Activated T-helper 1 cell treated with anti-CD3 and anti-CD28 coated beads, Interleukin-12 subunit alpha, Interleukin-12 subunit beta, Interleukin-2, Interleukin-4 antibody, amounts not matched to agents 30 ng/mL and 10 ng/mL and 1 ng/mL, durations not matched to agents 14 hours and 24 hours and 36 hours (primary cell): ENCODE measurements at regions of chr2 and their contacts with region 1.

Region 1: GRCh38 chr2:127526149-127527000 is at the start of gene IWS1:
- DNase-seq: peak; percentile 92
- H3K4me3 Mint-ChIP-seq: peak within 1 kb of the TSS; percentile 92
- H3K27ac Mint-ChIP-seq: peak within 1 kb of the TSS; percentile 94
- H3K4me1 Mint-ChIP-seq: peaks cover 29% of the 10 kb centered on the region
- H3K27me3 Mint-ChIP-seq: peaks cover 10% of the 10 kb centered on the region
- total RNA-seq, gene IWS1: 52.3 and 57.6 TPM in 2 replicates

Region 2: DNA sequence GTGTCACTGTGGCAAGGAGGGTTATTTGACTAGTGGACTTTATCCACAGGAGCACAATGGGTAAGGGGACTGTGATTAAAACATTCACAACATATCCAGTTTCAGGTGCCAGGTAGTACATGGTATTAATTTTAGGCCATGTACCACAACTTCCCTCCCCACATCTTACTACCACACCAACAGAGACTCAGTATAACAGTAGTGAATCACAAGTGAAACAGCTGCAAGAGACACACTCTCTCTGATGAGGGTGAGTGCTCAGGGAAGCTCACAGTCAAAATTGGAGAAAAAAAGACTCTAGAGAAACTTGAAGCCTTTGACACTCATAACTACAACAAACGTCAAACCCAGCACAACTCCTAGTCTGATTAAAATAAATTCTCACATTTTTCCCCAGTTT is 1238.0 kb before region 1 on chr2:
- intact Hi-C with region 1: no loop called
- DNase-seq: no peak
- H3K4me3 Mint-ChIP-seq: no peak overlapping the region
- H3K27ac Mint-ChIP-seq: no peak overlapping the region
- H3K4me1 Mint-ChIP-seq: no peaks in the 10 kb centered on the region
- H3K27me3 Mint-ChIP-seq: no peaks in the 10 kb centered on the region

Region 3: DNA sequence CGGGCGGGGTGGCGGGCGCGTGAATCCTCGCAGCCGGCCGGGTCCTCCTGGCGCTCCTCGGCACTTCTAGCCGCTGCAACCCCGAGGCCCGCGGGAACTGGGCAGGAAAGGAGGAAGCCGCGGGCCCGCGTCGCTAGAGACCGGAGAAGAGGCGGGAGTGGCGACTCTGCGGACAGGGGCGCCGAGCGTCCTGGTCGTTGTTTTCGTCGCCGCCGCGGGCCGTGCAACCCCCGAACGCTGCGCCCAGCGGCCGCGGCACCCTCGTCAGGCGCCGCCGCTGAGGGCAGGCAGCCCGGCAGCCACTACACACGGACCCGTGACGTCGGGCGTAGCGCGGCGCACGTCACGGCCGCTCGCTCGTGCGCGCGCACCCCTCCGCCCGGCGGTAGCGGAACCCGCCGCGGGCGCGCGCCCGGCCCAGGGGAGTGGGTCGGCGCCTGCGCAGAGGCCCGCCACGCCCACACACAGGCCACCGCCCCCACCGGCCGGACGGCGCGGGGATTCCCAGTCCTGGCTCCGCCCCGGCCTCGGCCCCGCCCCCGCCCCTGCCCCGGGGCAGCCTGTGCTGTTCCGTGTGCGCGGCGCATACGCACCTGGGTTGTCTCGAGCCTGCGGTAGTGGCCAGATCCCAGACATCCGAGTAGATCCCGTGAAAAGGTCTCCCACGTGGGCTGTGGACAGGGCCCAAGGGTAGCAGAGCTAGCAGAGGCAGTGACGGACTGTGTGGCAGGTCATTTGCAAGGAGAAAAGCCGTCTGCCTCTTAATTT is 138.5 kb before region 1 on chr2 and contains the start of gene MAP3K2:
- intact Hi-C with region 1: loop called (anchors 1 kb)
- DNase-seq: peak; percentile 89
- H3K4me3 Mint-ChIP-seq: peak within 1 kb of the TSS; percentile 96
- H3K27ac Mint-ChIP-seq: peak within 1 kb of the TSS; percentile 98
- H3K4me1 Mint-ChIP-seq: peaks cover 74% of the 10 kb centered on the region
- H3K27me3 Mint-ChIP-seq: no peaks in the 10 kb centered on the region
- total RNA-seq, gene MAP3K2: 64.1 and 66.1 TPM in 2 replicates

Region 4: DNA sequence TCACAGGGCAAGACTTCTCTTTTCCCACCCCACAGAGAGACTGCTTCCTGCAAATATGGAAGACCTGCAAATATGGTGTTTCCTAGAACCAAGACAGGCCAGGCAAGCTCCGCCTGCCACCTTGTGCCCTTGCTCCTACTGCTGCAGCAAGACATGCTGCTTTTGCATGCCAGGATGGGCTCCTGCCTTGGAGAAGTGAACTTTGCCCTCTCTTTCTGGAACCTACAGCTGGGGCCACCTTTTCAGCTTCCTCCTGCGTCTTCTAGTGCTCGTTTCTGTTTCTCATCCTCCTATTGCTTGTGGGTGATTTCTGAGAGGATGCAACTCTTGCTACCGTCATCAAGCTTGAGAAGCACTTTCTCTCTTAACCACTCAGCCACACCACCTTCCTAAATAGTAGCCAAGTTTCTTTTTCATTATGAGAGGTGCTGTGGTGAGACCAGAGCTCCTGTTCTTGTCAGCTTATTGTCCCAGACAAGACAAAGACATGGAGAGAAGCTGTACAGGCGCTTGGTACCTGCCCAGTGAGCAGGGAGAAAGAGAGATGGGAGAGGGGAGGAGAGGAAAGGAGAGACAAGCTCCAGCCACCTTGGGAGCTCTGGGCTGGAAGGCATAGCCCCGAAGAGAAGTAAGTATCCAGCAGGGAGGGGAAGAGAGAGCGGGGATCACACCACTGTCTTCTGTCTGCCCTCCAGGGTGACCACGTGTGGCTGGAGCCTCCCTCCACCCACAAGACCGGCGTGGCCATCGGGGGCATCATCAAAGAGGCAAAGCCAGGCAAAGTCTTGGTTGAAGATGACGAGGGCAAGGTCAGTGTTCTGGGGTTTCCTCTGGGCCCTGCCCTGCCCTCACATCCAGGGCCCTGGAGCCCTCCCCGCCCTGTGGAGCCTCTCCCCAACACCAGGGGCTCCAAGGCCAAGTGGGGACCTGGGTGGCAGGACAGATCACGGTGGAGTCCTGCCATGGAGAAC is 37.4 kb after region 1 on chr2:
- intact Hi-C with region 1: loop called (anchors 1 kb)
- DNase-seq: peak; percentile 46
- H3K4me3 Mint-ChIP-seq: peak overlapping the region; percentile 12
- H3K27ac Mint-ChIP-seq: peak overlapping the region; percentile 30
- H3K4me1 Mint-ChIP-seq: peaks cover 16% of the 10 kb centered on the region
- H3K27me3 Mint-ChIP-seq: peaks cover 32% of the 10 kb centered on the region

Region 5: GRCh38 chr2:127701193-127701650 is 174.8 kb after region 1 on chr2 and contains the start of gene SFT2D3:
- intact Hi-C with region 1: loop called (anchors 2 kb)
- DNase-seq: peak; percentile 89
- H3K4me3 Mint-ChIP-seq: peak within 1 kb of the TSS; percentile 92
- H3K27ac Mint-ChIP-seq: peak within 1 kb of the TSS; percentile 97
- H3K4me1 Mint-ChIP-seq: peaks cover 35% of the 10 kb centered on the region
- H3K27me3 Mint-ChIP-seq: no peaks in the 10 kb centered on the region
- total RNA-seq, gene SFT2D3: 6.6 and 7.1 TPM in 2 replicates

Region 6: DNA sequence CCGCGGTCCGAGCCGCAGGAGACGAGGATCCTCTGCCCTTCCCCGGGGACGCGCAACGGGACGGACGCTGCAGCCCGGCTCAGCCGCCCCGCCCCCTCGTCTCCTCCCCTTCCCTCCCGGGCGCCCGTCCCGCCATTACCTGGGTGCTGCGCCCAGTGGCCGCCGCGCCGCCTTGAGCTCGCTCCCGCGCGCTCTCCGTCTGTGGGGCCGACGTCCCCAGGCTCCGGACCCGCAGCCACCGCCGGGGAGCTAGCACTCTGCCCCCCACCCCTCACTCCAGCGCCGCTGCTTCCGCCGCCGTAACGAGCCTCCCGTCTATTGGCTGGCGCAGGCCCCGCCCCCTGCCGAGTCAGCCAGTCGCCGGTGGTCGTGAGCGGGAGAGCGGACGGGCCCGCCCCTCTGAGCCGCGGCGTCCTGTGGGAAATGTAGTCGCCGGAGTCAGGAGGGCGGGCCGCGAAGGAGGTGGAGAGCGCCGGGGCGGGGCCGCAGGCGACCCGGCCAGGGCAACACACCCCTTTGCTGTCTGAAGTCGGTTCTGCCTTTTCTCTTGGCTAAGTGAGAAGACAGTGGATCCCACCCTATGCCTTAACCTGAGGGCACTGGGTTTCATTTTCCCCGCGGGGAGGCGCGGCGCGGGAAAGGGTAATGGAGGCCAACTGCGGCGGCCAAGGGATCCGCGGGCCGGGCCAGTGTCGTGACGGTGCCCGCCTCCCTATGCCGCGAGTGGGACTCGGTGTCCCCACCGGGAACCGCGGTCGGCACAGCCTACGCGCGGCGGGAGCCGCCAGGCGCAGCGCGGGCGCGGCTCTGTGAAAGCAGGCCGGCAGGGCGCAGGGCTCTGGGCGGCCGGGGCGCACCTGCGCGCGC is 501.7 kb after region 1 on chr2 and contains the start of gene SAP130:
- intact Hi-C with region 1: loop called (anchors 1 kb)
- DNase-seq: peak; percentile 99
- H3K4me3 Mint-ChIP-seq: peak within 1 kb of the TSS; percentile 99
- H3K27ac Mint-ChIP-seq: peak within 1 kb of the TSS; percentile 93
- H3K4me1 Mint-ChIP-seq: peaks cover 23% of the 10 kb centered on the region
- H3K27me3 Mint-ChIP-seq: peaks cover 4% of the 10 kb centered on the region
- total RNA-seq, gene SAP130: 30.9 and 31.5 TPM in 2 replicates